Calu3 (cell line): ENCODE measurements at regions of chr12 and their contacts with region 1.

Region 1: GRCh38 chr12:98998697-98999299 is 353.7 kb downstream of the APAF1 start:
- DNase-seq: no peak
- H3K4me3 Mint-ChIP-seq: no peak overlapping the region
- H3K27ac Mint-ChIP-seq: no peak overlapping the region
- H3K4me1 Mint-ChIP-seq: no peaks in the 10 kb centered on the region
- H3K27me3 Mint-ChIP-seq: peaks cover 18% of the 10 kb centered on the region
- CTCF ChIP-seq: peak; percentile 40

Region 2: DNA sequence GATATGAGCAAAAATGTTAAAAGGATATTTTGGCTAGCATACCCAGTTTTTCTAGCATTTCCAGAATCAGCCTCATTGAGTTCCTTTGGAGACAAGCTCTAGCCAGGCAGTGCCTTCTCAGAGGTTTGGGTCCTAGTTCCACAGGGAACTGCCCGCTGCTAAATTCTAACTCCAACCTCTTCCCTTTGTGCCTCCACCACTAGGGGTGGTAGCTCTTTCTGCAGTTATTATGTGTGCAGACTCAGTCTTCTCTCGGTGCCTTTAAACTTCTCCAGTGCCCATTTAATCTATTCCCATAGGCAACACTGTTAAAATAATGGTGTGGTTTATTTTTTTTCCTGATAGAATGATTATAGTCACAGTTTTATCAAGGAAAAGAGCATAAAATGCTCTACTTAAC is 426.8 kb before region 1 on chr12:
- CTCF ChIA-PET with region 1: interaction called, 15 read pairs
- intact Hi-C with region 1: loop called (anchors 2 kb)
- DNase-seq: no peak
- H3K4me3 Mint-ChIP-seq: no peak overlapping the region
- H3K27ac Mint-ChIP-seq: no peak overlapping the region
- H3K4me1 Mint-ChIP-seq: no peaks in the 10 kb centered on the region
- H3K27me3 Mint-ChIP-seq: no peaks in the 10 kb centered on the region
- CTCF ChIP-seq: peak; percentile 23

Region 3: GRCh38 chr12:98698603-98699463 is 300.0 kb before region 1 on chr12:
- CTCF ChIA-PET with region 1: interaction called, 10 read pairs
- intact Hi-C with region 1: loop called (anchors 1 kb)
- DNase-seq: peak; percentile 49
- H3K4me3 Mint-ChIP-seq: no peak overlapping the region
- H3K27ac Mint-ChIP-seq: no peak overlapping the region
- H3K4me1 Mint-ChIP-seq: no peaks in the 10 kb centered on the region
- H3K27me3 Mint-ChIP-seq: no peaks in the 10 kb centered on the region
- CTCF ChIP-seq: peak; percentile 59

Region 4: DNA sequence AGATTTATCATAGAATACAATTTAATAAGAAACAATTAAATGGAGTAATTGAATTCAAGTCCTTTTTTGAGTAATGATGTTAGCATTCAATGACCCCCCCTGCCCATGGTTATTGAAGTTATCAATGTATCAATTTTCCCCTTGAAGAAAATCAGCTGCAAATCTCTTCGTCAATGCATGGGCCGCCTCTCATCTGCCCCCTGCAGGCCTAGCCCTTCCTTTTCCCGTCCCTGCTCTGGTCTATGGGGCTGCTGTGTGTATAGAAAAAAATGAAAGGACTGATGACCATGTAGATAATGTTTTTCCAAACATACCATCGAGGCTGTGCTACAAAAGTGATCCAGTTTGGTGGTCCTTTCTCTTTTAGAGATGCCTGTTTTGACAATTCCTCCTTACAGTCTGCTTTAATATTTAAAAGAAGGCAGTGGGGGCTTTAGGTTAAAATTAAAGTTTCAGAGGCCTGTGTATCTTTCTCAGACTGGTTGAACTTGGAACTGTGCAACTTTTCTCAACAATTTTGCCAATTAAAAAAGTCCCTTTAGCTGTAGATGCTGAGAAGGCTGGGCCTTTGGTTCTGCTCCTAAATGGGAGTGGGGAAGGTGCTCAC is 255.3 kb before region 1 on chr12:
- CTCF ChIA-PET with region 1: no interaction called
- intact Hi-C with region 1: loop called (anchors 5 kb)
- DNase-seq: peak; percentile 64
- H3K4me3 Mint-ChIP-seq: no peak overlapping the region
- H3K27ac Mint-ChIP-seq: no peak overlapping the region
- H3K4me1 Mint-ChIP-seq: no peaks in the 10 kb centered on the region
- H3K27me3 Mint-ChIP-seq: peaks cover 63% of the 10 kb centered on the region
- CTCF ChIP-seq: peak; percentile 48

Region 5: DNA sequence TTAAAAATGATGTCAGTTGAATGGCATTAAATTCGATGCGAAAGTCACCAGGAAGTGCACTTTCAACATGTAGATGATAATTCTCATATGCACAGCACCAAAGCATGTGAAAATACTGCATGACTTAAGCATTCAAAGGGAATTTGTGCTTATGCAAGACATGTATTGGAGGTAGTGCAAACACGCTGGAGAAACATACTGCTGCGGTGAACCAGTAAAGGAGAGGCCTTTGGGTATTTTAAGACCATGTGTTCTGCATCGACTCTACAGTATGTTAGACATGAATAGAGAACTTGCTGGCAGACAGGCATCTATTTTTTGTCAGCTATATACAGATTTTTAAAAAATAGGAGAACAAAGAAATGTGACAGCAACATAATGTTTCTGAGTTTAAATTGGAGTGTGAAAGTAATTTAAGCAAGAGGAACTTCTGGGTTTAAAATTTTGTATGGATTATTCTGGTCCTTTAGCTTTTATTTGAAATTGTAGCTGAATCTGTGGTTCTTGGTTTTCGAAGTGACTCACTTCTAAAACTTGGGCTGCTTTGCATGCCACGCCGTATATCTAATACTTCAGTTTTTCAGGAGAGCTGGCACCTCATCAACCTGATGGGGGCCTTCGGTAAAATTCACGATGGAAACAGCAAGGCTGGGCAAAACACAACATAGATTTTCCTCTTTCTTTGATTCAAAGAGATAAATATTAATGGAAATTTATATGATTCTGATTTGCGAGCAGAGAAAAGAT is 55.0 kb after region 1 on chr12:
- CTCF ChIA-PET with region 1: no interaction called
- intact Hi-C with region 1: no loop called
- DNase-seq: no peak
- H3K4me3 Mint-ChIP-seq: no peak overlapping the region
- H3K27ac Mint-ChIP-seq: no peak overlapping the region
- H3K4me1 Mint-ChIP-seq: no peaks in the 10 kb centered on the region
- H3K27me3 Mint-ChIP-seq: no peaks in the 10 kb centered on the region
- CTCF ChIP-seq: no peak

Region 6: DNA sequence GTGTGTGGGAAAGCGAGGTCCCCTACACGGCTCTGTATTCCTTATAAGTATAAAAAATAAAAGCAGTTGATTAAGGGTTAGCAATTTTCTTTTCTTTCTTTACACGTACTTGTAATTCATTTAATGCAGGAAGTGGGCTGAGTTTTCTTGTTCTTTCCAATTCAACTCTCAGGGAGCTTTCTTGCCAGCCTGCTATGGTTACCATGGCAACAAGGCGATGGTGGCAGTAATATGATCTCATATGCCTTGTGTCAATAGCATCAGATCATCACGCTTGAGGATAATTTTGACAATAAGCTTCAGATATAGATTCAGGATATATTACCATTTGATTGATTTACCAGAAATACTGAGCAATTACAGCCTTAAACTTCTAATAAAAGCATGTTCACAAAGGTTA is 112.8 kb after region 1 on chr12:
- CTCF ChIA-PET with region 1: no interaction called
- intact Hi-C with region 1: no loop called
- DNase-seq: no peak
- H3K4me3 Mint-ChIP-seq: no peak overlapping the region
- H3K27ac Mint-ChIP-seq: no peak overlapping the region
- H3K4me1 Mint-ChIP-seq: no peaks in the 10 kb centered on the region
- H3K27me3 Mint-ChIP-seq: no peaks in the 10 kb centered on the region
- CTCF ChIP-seq: no peak